ENCODE measurements at regions of chr22 and their contacts with region 1.

Region 1: GRCh38 chr22:45413368-45414211 is at the starts of genes RIBC2 and SMC1B:
- DNase-seq: peak; percentile 58 to 89 (median 84)
- ATAC-seq: peak; percentile 97
- H3K4me3 ChIP-seq: peak within 1 kb of the TSS; percentile 77
- H3K4me3 Mint-ChIP-seq: peak within 1 kb of the TSS; percentile 68 to 90 (median 80)
- H3K27ac ChIP-seq: peak within 1 kb of the TSS; percentile 54
- H3K27ac Mint-ChIP-seq: peak within 1 kb of the TSS; percentile 36 to 96 (median 74)
- H3K4me1 ChIP-seq: peaks cover 8 to 12% of the 10 kb centered on the region in 2 donors
- H3K4me1 Mint-ChIP-seq: peaks cover 0 to 21% (median 14%) of the 10 kb centered on the region in 7 donors
- H3K27me3 ChIP-seq: no peaks in the 10 kb centered on the region
- H3K27me3 Mint-ChIP-seq: peaks cover 0 to 4% (median 0%) of the 10 kb centered on the region in 5 donors
- total RNA-seq, gene RIBC2: 0.59 to 9.5 (median 1.4) TPM in 3 of 5 experiments, not detected in the others
- total RNA-seq, gene SMC1B: 0.11 to 0.70 TPM in 2 of 5 experiments, not detected in the others

Region 2: DNA sequence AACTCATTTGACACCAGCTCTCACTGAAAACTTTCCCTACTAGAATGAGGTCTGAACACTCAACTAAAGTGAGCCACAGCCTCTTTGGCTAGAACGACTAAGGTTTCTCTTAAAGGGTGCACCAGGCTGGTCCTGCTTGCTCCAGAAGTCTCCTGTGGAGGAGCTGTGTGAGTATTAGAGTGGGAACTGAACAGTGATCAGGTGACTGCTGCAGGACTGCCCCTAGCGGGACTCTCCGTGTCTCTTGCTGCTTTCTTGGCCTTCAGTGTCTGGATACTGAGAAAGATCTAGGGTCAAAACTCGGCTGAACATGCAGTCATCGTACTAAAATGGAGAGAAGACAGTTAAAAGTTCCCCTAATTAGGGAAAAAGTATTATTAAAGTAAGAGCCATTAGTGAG is 69.3 kb before region 1 on chr22:
- CTCF ChIA-PET with region 1: no interaction called
- POLR2A ChIA-PET with region 1: no interaction called
- intact Hi-C with region 1: loop called in 1 of 2 experiments (anchors 5 kb)
- DNase-seq: no peak
- ATAC-seq: no peak
- H3K4me3 ChIP-seq: no peak overlapping the region
- H3K4me3 Mint-ChIP-seq: no peak overlapping the region
- H3K27ac ChIP-seq: no peak overlapping the region
- H3K27ac Mint-ChIP-seq: peak overlapping the region in 8 of 9 donors; percentile 36 to 90 (median 76)
- H3K4me1 ChIP-seq: peaks cover 0 to 24% of the 10 kb centered on the region in 2 donors
- H3K4me1 Mint-ChIP-seq: peaks cover 5 to 42% (median 26%) of the 10 kb centered on the region in 7 donors
- H3K27me3 ChIP-seq: no peaks in the 10 kb centered on the region
- H3K27me3 Mint-ChIP-seq: no peaks in the 10 kb centered on the region

Region 3: DNA sequence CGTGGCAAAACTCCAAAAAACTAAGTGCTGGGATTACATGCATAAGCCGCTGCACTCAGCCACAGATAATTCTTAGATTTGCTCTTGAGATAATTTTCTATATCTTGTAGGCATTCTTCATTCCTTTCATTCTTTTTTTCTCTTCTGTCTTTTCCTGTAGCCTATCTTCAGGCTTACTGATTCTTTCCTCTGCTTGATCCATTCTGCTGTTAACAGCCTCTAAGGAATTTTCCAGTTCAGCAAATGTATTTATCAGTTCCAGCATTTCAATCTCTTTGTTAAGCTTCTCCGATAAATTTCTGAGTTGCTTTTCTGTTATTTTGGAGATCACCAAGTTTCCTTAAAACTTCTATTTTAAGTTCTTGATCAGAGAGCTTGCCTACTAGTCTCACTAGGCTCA is 46.9 kb before region 1 on chr22:
- CTCF ChIA-PET with region 1: no interaction called
- POLR2A ChIA-PET with region 1: no interaction called
- intact Hi-C with region 1: no loop called
- DNase-seq: no peak
- ATAC-seq: no peak
- H3K4me3 ChIP-seq: no peak overlapping the region
- H3K4me3 Mint-ChIP-seq: no peak overlapping the region
- H3K27ac ChIP-seq: no peak overlapping the region
- H3K27ac Mint-ChIP-seq: no peak overlapping the region
- H3K4me1 ChIP-seq: no peaks in the 10 kb centered on the region
- H3K4me1 Mint-ChIP-seq: peaks cover 0 to 6% (median 0%) of the 10 kb centered on the region in 7 donors
- H3K27me3 ChIP-seq: peaks cover 0 to 3% of the 10 kb centered on the region in 2 donors
- H3K27me3 Mint-ChIP-seq: peaks cover 0 to 16% (median 0%) of the 10 kb centered on the region in 5 donors

Region 4: GRCh38 chr22:45435544-45436139 is 22.1 kb after region 1 on chr22:
- CTCF ChIA-PET with region 1: interaction called, 3 read pairs
- POLR2A ChIA-PET with region 1: no interaction called
- intact Hi-C with region 1: loop called (anchors 1 to 2 kb)
- DNase-seq: peak; percentile 60 to 79 (median 73)
- ATAC-seq: peak; percentile 93
- H3K4me3 ChIP-seq: no peak overlapping the region
- H3K4me3 Mint-ChIP-seq: peak overlapping the region in 5 of 10 donors; percentile 12 to 65 (median 32)
- H3K27ac ChIP-seq: no peak overlapping the region
- H3K27ac Mint-ChIP-seq: peak overlapping the region in 6 of 9 donors; percentile 31 to 71 (median 60)
- H3K4me1 ChIP-seq: peaks cover 2 to 6% of the 10 kb centered on the region in 2 donors
- H3K4me1 Mint-ChIP-seq: peaks cover 9 to 22% (median 13%) of the 10 kb centered on the region in 7 donors
- H3K27me3 ChIP-seq: no peaks in the 10 kb centered on the region
- H3K27me3 Mint-ChIP-seq: peaks cover 0 to 7% (median 0%) of the 10 kb centered on the region in 5 donors

Region 5: DNA sequence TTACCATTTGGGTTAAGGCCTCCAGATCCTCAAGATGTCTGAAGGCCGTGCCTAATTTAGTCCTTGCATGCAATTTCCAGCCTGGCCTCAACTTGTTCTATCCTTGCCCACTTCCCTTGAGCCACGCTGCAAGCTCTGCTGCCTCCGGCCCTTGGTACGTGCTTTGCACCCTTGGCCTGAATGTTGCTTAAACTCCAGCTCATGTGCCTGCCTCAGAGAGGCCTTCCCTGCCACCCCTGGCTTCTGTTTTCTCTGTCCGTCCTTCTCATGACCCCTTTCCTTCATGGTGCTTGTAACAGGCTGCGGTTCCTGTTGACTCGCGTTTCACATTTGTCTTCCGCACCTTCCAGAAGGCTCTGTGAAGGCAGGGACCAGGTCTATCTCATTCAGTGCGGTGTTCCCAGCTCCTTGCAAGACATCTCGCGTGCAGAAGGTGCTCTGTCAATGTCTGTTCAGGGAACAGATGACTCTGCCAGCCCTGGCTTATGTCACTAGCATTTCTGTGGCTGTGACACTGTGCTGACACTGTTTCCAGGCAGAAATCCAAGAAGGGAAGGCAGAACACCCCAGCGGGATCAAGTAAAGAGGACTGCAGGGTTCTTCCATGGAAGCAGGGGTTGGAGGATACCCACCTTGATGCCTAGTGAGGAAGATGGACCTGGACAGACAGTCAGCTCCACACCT is 150.9 kb after region 1 on chr22:
- CTCF ChIA-PET with region 1: no interaction called
- POLR2A ChIA-PET with region 1: no interaction called
- intact Hi-C with region 1: no loop called
- DNase-seq: no peak
- ATAC-seq: no peak
- H3K4me3 ChIP-seq: no peak overlapping the region
- H3K4me3 Mint-ChIP-seq: no peak overlapping the region
- H3K27ac ChIP-seq: no peak overlapping the region
- H3K27ac Mint-ChIP-seq: no peak overlapping the region
- H3K4me1 ChIP-seq: no peaks in the 10 kb centered on the region
- H3K4me1 Mint-ChIP-seq: no peaks in the 10 kb centered on the region
- H3K27me3 ChIP-seq: no peaks in the 10 kb centered on the region
- H3K27me3 Mint-ChIP-seq: peaks cover 7 to 26% (median 18%) of the 10 kb centered on the region in 5 donors